ENCODE measurements at regions of chr3 and their contacts with region 1.

Region 1: GRCh38 chr3:49021813-49022687 is at the start of gene NDUFAF3:
- DNase-seq: peak; percentile 94
- ATAC-seq: peak; percentile 67
- H3K4me3 Mint-ChIP-seq: peak within 1 kb of the TSS; percentile 94
- H3K27ac Mint-ChIP-seq: peak within 1 kb of the TSS; percentile 97
- H3K4me1 Mint-ChIP-seq: peaks cover 66% of the 10 kb centered on the region
- H3K27me3 Mint-ChIP-seq: no peaks in the 10 kb centered on the region
- CTCF ChIP-seq: peak; percentile 39
- total RNA-seq, gene NDUFAF3: 86.3 and 86.5 TPM in 2 replicates

Region 2: GRCh38 chr3:48592282-48593087 is 429.6 kb before region 1 on chr3:
- CTCF ChIA-PET with region 1: no interaction called
- POLR2A ChIA-PET with region 1: no interaction called
- intact Hi-C with region 1: no loop called
- DNase-seq: no peak
- ATAC-seq: no peak
- H3K4me3 Mint-ChIP-seq: no peak overlapping the region
- H3K27ac Mint-ChIP-seq: no peak overlapping the region
- H3K4me1 Mint-ChIP-seq: peaks cover 14% of the 10 kb centered on the region
- H3K27me3 Mint-ChIP-seq: peaks cover 42% of the 10 kb centered on the region
- CTCF ChIP-seq: no peak

Region 3: GRCh38 chr3:48898383-48899234 is 123.4 kb before region 1 on chr3 and contains the start of gene SLC25A20:
- CTCF ChIA-PET with region 1: no interaction called
- POLR2A ChIA-PET with region 1: interaction called, 14 read pairs
- intact Hi-C with region 1: no loop called
- DNase-seq: peak; percentile 88
- ATAC-seq: peak; percentile 99
- H3K4me3 Mint-ChIP-seq: peak within 1 kb of the TSS; percentile 92
- H3K27ac Mint-ChIP-seq: peak within 1 kb of the TSS; percentile 83
- H3K4me1 Mint-ChIP-seq: peaks cover 38% of the 10 kb centered on the region
- H3K27me3 Mint-ChIP-seq: no peaks in the 10 kb centered on the region
- CTCF ChIP-seq: no peak
- total RNA-seq, gene SLC25A20: 9.9 and 11.0 TPM in 2 replicates

Region 4: DNA sequence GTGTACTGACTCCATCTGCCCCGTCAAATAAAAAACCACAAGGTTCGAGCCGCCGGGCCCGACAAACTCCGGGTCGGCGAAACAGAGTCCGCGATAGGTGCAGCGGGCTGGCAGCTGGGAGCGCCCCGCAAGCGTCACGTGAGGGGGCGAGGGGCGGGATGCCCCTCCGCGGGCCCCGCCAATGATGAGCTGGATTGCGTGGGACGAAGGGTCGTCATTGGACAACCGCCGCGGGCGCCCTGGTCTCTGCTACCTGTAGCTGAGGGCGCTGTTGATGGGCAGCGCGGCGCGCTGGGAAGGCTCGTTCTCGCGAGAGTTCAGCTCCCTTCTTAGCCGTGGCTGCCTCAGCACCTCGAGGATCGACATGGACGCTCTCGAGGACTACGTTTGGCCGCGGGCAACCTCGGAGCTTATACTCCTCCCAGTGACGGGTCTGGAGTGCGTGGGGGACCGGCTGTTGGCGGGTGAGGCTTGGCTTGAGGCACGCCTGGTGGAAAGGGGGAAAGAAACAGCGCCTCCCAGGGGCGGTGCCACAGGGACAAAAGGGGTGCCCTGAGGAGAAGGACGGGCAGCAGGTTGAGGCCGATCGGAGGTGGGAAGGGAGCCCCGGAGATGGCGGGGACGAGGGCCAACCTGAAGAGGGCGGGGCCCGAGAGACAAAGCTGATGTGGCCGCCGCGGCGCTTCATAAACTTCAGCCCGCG is 14.8 kb before region 1 on chr3 and contains the start of gene WDR6:
- CTCF ChIA-PET with region 1: interaction called, 30 read pairs
- POLR2A ChIA-PET with region 1: interaction called, 372 read pairs
- intact Hi-C with region 1: loop called (anchors 1 kb)
- DNase-seq: peak; percentile 91
- ATAC-seq: peak; percentile 89
- H3K4me3 Mint-ChIP-seq: peak within 1 kb of the TSS; percentile 100
- H3K27ac Mint-ChIP-seq: peak within 1 kb of the TSS; percentile 99
- H3K4me1 Mint-ChIP-seq: peaks cover 21% of the 10 kb centered on the region
- H3K27me3 Mint-ChIP-seq: no peaks in the 10 kb centered on the region
- CTCF ChIP-seq: no peak
- total RNA-seq, gene WDR6: 205 and 250 TPM in 2 replicates

Region 5: DNA sequence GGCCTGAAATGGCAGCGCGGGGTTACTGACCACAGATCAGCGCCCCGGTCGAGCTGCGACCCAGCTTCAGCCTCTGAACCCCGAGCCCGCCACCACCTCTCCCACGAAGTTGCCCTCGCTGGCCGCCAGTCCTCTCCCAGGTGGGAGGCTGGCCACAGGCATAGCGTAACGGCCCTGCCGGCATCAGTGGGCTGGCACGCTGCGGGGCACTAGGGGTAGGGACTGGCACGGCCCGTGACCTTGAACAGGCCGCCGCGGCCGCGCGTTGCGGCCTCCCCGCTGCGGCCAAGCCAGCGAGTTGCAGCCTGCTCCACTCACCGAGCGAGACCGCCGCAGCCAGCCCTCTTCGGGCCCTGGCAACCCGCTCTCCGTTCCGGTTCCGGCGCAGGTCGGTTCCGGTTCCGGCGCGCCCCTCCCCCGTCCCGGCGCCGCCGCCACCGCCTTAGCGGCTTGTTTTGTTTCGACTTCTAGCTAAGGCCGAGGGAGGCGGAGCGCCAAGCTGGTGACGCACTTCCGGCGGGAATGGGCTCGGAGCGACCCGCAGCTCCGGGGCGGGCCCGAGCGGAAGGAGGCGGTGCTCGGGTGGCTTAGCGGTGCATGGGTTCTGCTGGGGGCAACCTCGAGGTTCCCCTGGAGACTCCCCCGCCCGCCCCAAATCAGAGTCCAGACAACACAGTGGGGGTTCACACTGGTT is 98.5 kb after region 1 on chr3 and contains the start of gene USP19:
- CTCF ChIA-PET with region 1: no interaction called
- POLR2A ChIA-PET with region 1: interaction called, 30 read pairs
- intact Hi-C with region 1: loop called (anchors 1 kb)
- DNase-seq: peak; percentile 95
- ATAC-seq: peak; percentile 93
- H3K4me3 Mint-ChIP-seq: peak within 1 kb of the TSS; percentile 84
- H3K27ac Mint-ChIP-seq: peak within 1 kb of the TSS; percentile 79
- H3K4me1 Mint-ChIP-seq: peaks cover 17% of the 10 kb centered on the region
- H3K27me3 Mint-ChIP-seq: no peaks in the 10 kb centered on the region
- CTCF ChIP-seq: no peak
- total RNA-seq, gene USP19: 62.0 and 75.3 TPM in 2 replicates

Region 6: GRCh38 chr3:49469936-49470713 is 448.1 kb after region 1 on chr3 and contains the start of gene DAG1:
- CTCF ChIA-PET with region 1: no interaction called
- POLR2A ChIA-PET with region 1: interaction called, 9 read pairs
- intact Hi-C with region 1: loop called (anchors 2 kb)
- DNase-seq: peak; percentile 97
- ATAC-seq: peak; percentile 87
- H3K4me3 Mint-ChIP-seq: peak within 1 kb of the TSS; percentile 91
- H3K27ac Mint-ChIP-seq: peak within 1 kb of the TSS; percentile 96
- H3K4me1 Mint-ChIP-seq: peaks cover 26% of the 10 kb centered on the region
- H3K27me3 Mint-ChIP-seq: no peaks in the 10 kb centered on the region
- CTCF ChIP-seq: no peak
- total RNA-seq, gene DAG1: 18.5 and 19.7 TPM in 2 replicates

Measured in activated B cell treated with CpG ODN at 0.5 μM for 24 hours (primary cell).